Left cardiac atrium (tissue), 4 donors: ENCODE measurements at regions of chr21 and their contacts with region 1.

Region 1: DNA sequence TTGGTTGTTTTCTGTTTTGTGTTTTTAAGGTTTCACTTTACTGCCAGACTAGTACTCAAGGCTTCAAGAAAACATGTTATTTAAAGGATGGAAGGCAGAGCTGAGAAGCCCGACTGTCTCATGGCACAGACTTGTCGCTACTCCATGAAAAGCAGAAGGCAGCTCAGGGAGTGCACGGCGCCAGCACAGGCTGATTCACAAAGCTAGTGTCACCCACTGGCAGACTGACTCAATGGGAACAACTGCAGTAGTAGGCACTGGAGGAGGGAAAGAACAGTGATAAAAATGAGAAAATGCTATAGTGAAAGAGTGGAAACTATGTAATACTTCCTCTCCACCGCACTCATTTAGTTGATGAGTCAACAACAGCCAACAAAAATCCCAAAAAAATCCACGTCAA is 14.7 kb downstream of the HSF2BP start:
- DNase-seq: peak; percentile 39
- ATAC-seq: peak in 1 of 2 donors; percentile 27

Region 2: DNA sequence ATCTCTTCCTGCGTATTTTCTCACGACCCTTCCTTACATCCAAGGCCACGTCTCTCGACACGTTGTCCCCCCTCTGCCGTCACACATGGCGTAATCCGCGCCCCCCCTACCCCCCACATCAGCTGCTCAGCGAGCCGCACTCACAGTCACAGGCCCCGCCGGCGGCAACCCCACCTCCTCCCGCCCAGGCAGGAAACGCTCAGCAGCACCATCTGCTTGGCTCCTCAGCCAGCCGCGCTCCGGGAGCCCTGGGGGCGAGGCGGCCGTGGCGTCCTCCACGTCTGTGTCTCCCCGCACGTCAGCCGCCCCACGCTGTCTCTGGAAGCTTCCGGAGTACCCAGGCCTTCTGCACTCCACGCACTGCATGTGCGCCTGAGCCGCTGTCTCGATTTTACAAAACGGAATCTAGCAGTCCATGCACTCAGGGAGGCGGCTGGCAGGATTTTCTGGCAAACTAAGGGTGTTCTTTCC is 282.3 kb before region 1 on chr21:
- intact Hi-C with region 1: no loop called
- DNase-seq: peak; percentile 88
- ATAC-seq: peak; percentile 78 to 84

Region 3: DNA sequence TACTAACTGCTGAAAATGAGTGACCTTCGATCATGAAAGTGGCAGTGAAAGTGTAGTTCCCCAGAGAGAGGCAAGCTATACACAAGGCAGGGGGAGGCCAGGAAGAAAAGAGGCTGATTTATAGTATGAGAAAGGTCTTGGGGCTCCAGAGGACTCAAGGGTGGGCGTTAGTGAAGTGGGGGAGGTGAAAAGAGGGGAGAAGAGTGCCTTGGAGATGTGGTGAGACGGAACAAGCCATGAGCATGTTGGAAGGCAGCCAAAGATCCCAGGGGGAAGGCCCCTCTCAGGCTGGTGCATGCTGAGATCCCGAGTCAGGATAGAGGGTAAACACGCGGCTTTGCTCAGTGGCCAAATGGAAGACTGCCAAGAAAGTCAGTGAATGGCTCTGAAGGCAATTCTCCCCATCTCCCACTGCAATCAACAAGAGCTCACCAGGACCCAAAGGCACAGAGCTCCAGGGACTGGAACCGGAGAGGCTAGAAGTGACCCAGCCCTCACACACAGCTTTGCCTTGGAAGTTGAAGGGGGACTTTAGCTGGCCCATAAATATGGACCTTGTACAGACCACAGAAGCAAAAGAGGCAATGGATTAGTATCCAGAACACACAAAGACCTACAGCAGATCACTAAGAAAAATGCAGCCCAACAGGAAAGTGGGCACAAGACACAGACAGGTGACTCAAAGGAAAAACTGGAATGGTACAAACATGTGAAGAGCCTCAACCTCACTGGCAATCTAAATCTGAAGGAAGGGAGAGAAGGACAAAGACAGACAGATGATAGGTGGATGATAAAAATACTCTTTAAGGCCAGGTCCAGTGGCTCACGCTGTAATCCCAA is 34.9 kb before region 1 on chr21:
- intact Hi-C with region 1: loop called in 1 of 2 experiments (anchors 5 kb)
- DNase-seq: peak; percentile 39
- ATAC-seq: peak in 1 of 2 donors; percentile 51

Region 4: DNA sequence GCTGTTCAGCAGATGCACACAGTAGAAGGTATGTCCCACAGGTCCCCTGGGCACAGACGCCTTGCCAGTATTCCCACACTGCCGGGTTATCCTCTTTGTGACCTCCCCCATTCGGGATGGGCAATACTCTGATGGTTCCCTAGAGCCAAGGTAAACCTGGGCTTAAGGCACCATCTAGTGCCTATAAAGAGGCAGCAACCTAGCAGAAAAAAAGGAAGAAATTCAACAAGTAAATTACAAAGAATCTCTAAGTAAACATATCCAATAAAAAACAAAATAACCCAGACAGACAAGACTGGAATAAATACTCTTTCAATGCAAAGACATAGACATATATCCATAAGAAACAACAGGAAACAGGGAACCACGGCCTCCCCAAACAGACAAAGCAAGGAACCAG is 24.8 kb before region 1 on chr21:
- intact Hi-C with region 1: loop called in 1 of 2 experiments (anchors 2 kb)
- DNase-seq: no peak
- ATAC-seq: no peak

Region 5: DNA sequence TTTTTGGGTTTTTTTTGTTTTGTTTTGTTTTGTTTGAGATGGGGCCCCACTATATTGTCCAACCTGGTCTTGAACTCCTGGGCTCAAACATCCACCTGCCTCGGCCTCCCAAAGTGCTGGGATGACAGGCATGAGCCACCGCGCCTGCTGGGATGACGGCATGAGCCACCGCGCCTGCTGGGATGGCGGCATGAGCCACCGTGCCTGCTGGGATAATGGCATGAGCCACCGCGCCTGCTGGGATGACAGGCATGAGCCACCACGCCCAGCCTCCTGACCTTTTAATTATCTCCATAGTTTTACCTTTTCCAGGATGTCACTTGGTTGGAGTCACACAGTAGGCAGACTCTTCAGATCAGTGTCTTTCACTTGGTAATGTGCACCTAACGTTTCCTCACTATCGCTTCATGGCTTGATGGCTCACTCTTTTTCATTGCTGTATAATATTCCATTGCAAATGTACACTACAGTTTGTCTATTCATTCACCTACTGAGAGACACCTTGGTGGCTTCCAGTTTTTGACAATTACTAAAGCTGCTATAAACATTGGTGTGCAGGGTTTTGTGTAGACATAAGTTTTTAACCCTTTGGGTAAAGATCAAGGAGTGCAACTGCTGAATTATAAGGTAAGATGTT is 64.3 kb after region 1 on chr21:
- intact Hi-C with region 1: no loop called
- DNase-seq: no peak
- ATAC-seq: no peak

Region 6: DNA sequence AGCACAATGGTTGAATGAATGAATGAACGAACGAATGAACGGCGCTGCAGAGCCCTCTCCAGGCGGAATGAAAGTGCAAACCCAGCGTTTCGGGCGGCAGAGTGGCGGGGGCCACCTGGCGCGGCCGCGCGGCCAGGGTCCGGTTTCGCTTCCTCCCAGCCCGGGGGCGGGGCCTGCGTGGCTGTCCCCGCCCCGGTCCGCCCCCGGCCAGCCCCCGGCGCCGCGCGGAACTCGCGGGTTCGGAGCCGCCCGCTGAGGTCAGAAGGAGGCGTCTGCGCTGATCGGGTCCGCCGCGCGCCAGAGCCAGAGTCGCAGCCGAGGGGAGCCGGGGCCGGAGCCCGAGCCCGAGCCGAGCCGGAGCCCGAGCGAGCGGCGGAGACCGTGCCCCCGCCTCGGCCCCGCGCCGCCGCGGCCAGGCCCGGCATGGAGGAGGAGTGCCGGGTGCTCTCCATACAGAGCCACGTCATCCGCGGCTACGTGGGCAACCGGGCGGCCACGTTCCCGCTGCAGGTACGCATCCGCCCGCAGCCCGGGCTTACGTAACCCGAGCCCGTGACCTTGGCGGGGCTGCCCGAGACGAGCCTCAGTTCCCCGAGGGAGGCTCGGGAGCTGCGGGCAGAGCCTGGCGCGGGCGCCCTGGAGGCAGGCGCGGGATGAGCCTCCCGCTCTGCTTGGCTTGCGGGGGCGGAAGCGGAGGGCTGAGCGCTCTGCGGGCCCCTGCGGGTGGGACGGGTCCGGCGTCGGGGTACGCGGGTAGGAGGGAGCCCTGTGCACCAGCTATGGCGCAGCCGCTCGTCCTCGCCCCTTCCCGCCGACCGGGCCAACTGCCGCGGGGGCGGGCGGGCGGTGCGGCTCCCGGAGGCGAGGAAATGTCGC is 74.5 kb after region 1 on chr21 and contains the start of gene PDXK:
- intact Hi-C with region 1: no loop called
- DNase-seq: peak; percentile 90
- ATAC-seq: peak; percentile 93 to 95
- total RNA-seq, gene PDXK: 101 to 120 TPM

Region 7: GRCh38 chr21:43916691-43917514 is 272.3 kb after region 1 on chr21:
- intact Hi-C with region 1: no loop called
- DNase-seq: no peak
- ATAC-seq: peak; percentile 62 to 73